Endothelial cell of umbilical vein (primary cell): ENCODE measurements at regions of chr19 and their contacts with region 1.

Region 1: DNA sequence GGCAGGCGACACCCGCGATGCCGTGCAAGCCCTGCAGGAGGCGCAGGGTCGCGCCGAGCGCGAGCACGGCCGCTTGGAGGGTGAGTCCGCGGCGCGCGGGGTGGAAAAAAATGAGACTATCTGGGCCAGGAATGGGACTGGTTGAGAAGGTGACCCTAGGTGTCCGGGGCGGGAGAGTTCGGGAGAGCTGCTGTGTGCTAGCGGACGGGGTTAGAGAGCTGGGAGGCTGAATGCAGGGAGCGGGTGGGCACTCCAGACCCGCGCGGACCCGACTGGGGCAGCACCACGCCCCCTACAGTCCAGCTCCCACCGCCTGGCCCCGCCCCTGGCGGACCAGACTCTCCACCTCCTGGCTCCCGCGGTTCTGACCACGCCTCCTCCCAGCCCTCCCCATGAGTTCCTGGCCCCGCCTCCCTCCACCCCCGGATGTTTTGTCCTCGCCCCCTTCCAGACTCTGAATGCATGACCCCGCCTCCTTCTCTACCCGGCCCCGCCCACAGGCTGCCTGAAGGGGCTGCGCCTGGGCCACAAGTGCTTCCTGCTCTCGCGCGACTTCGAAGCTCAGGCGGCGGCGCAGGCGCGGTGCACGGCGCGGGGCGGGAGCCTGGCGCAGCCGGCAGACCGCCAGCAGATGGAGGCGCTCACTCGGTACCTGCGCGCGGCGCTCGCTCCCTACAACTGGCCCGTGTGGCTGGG is 1.5 kb downstream of the CLEC11A start:
- DNase-seq: peak; percentile 100
- H3K4me3 ChIP-seq: peak overlapping the region; percentile 40 to 84 (median 53)
- H3K27ac ChIP-seq: peak overlapping the region; percentile 32
- H3K4me1 ChIP-seq: peaks cover 22% of the 10 kb centered on the region
- H3K27me3 ChIP-seq: no peaks in the 10 kb centered on the region
- CTCF ChIP-seq: peak; percentile 79 to 90
- POLR2A ChIP-seq: peak; percentile 96

Region 2: GRCh38 chr19:50376166-50377050 is 348.3 kb before region 1 on chr19 and contains the start of gene NR1H2:
- CTCF ChIA-PET with region 1: no interaction called
- POLR2A ChIA-PET with region 1: no interaction called
- dilution Hi-C with region 1: no loop called
- intact Hi-C with region 1: loop called (anchors 2 kb)
- DNase-seq: peak; percentile 96
- H3K4me3 ChIP-seq: peak within 1 kb of the TSS; percentile 69 to 83 (median 77)
- H3K27ac ChIP-seq: peak within 1 kb of the TSS; percentile 94
- H3K4me1 ChIP-seq: peaks cover 13% of the 10 kb centered on the region
- H3K27me3 ChIP-seq: no peaks in the 10 kb centered on the region
- CTCF ChIP-seq: no peak
- POLR2A ChIP-seq: peak; percentile 64
- total RNA-seq, gene NR1H2: 46.7 and 50.6 TPM in 2 replicates

Region 3: DNA sequence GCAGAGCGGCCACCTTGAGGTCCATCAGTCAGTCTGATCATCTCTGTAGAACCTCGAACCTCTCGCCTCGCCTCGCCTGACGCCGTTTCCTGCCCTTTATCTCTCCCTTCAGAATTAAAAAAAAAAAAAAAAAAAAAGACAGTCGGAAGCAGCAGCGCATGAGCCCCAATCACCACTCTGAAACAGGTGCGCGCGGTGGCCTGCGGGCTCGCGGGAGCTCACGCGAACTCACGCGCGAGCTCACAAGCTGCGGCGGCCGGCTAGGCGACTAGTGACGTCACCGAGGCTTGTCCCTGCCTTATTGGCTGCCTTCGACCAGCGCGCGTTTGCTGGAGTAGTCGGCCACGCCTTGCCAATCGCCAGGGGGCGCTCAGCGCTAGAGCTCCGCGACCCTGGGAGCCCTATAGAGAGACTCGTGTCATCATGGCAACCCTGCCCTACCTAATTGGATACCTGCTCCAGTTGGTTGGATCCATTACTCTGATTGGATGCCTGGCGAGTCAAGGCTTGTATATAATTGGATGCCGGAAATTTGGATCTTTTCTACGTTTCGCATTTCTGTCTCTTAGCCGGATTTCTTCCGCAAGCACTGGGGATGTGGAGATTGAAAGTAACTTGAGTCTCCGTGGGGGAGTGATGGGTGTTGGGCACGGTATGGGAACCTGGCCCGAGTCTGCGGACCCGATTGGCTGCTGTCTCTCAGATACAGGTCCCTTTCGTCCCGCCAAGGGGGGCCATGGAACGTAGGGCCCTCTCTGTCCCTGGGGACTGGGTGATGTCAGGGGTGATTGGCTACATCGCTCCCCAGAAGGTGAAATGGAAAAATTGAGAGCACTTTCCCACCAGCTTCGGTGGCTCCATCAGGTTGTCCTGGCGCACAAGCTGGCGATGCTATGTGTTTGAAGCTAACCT is 116.5 kb before region 1 on chr19:
- CTCF ChIA-PET with region 1: interaction called, 4 read pairs
- POLR2A ChIA-PET with region 1: no interaction called
- dilution Hi-C with region 1: no loop called
- intact Hi-C with region 1: loop called (anchors 5 kb)
- DNase-seq: peak; percentile 77
- H3K4me3 ChIP-seq: no peak overlapping the region
- H3K27ac ChIP-seq: no peak overlapping the region
- H3K4me1 ChIP-seq: no peaks in the 10 kb centered on the region
- H3K27me3 ChIP-seq: no peaks in the 10 kb centered on the region
- CTCF ChIP-seq: peak; percentile 75 to 83
- POLR2A ChIP-seq: no peak

Region 4: DNA sequence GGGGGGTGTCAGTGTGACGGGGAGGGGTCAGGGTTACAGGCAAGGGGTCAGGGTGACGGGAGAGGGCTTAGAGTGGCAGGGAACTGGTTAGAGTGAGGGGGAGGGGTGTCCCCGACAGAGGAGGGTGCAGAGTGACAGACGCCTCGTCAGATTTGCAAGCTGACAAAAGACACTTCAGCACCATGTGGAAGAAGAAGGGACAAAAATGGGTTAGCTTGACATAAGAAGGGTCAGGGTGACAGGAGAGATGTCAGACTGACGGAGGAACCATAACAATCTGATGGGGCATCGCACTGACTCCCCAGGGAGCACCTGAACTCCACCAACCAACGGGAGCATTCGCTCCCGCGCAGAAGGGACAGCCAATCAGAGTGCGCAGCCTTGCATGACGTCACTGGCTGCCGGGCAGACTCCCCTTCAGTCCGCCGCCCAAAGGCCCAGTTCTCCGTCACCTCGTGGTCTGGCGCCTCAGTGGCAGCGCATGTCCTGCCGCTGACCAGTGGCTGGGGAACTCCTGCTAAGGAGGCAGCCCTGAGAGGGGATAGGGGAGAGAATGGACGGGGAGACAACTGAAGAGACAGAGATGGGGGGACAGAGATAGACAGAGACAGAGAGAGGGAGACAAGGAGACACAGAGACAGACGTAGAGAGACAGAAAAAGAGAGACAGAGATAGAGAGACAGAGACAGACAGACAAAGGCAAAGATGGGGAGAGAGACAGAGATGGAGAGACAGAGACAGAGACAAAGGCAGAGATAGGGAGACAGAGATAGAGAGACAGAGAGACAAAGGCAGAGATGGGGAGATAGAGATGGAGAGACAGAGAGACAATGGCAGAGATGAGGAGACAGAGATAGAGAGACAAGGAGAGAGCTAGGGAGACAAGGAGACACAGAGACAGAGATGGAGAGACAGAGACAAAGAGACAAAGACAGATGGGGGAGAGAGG is 45.2 kb before region 1 on chr19:
- CTCF ChIA-PET with region 1: no interaction called
- POLR2A ChIA-PET with region 1: no interaction called
- dilution Hi-C with region 1: no loop called
- intact Hi-C with region 1: loop called (anchors 2 kb)
- DNase-seq: peak; percentile 84
- H3K4me3 ChIP-seq: no peak overlapping the region
- H3K27ac ChIP-seq: no peak overlapping the region
- H3K4me1 ChIP-seq: no peaks in the 10 kb centered on the region
- H3K27me3 ChIP-seq: no peaks in the 10 kb centered on the region
- CTCF ChIP-seq: no peak
- POLR2A ChIP-seq: no peak

Region 5: DNA sequence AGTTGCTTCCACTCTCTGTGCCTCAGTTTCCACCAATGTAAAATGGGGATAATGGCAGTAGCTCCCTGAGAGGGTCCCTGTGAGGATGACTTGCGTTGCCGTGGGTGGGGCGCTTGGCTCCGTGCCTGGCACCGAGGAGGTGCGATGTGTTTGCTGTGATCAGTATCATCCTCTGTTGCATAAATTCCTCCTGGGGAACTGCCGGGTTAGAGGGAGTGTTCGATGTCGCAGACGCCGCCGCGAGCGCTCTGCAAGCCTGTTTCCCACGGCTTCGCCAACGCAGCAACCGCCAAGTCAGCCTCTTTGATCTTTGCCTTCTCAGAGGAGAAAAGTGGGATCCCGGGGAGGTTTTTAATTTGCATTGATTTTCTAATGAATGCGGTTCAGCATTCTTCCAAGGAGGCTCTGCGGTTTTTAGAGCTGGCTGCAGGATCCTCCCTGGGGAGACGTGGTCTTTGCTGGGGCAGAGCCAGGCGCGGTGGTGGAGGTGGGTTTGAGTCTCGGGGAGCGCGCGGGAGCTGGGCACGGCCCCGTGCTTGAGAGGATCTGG is 53.2 kb after region 1 on chr19:
- CTCF ChIA-PET with region 1: interaction called, 47 read pairs
- POLR2A ChIA-PET with region 1: interaction called, 4 read pairs
- dilution Hi-C with region 1: no loop called
- intact Hi-C with region 1: loop called (anchors 1 kb)
- DNase-seq: no peak
- H3K4me3 ChIP-seq: no peak overlapping the region
- H3K27ac ChIP-seq: no peak overlapping the region
- H3K4me1 ChIP-seq: no peaks in the 10 kb centered on the region
- H3K27me3 ChIP-seq: peaks cover 26 to 29% of the 10 kb centered on the region in 2 experiments
- CTCF ChIP-seq: no peak
- POLR2A ChIP-seq: no peak

Region 6: DNA sequence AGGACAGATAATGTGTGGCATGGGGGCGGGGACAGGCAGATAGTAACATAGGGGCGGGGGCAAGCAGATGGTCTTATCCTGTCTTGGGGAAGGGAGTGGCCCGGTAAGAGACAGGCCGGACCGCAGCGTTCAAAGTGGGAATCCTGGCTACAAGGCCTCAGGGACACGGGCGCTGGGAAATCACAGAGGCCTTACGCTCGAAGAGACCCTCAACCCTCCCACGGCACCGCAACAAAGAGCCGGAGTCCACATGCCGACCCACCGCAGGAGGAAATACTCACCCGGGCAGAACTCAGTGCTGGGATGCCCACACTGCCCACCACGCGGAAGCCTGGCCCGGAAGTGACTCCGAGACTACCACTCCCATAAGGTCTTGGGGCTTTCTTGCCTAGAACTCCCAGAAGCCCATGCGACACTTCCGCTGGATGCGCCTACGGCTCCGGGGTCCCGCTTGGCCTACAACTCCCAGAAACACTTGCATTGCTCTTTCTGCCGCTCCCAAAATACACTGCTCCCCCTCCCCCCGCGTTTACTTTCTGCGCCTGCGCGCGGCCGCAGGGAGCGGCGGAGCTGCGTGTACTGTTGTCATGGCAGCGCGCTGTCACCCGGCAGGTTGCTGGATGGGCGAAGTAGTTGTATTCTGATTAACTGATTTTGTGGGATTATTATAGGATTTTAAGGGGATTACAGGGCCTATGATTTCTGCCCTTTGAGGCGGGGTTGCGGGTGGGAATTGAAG is 383.6 kb after region 1 on chr19 and contains the start of gene CTU1:
- CTCF ChIA-PET with region 1: no interaction called
- POLR2A ChIA-PET with region 1: no interaction called
- dilution Hi-C with region 1: no loop called
- intact Hi-C with region 1: loop called (anchors 5 kb)
- DNase-seq: peak; percentile 99
- H3K4me3 ChIP-seq: peak within 1 kb of the TSS; percentile 56 to 65 (median 64)
- H3K27ac ChIP-seq: peak within 1 kb of the TSS; percentile 51
- H3K4me1 ChIP-seq: peaks cover 11% of the 10 kb centered on the region
- H3K27me3 ChIP-seq: peaks cover 0 to 9% of the 10 kb centered on the region in 2 experiments
- CTCF ChIP-seq: no peak
- POLR2A ChIP-seq: peak; percentile 89
- total RNA-seq, gene CTU1: 8.2 and 8.7 TPM in 2 replicates